Ascending aorta (tissue), 2 donors: ENCODE measurements at regions of chr14 and their contacts with region 1.

Region 1: DNA sequence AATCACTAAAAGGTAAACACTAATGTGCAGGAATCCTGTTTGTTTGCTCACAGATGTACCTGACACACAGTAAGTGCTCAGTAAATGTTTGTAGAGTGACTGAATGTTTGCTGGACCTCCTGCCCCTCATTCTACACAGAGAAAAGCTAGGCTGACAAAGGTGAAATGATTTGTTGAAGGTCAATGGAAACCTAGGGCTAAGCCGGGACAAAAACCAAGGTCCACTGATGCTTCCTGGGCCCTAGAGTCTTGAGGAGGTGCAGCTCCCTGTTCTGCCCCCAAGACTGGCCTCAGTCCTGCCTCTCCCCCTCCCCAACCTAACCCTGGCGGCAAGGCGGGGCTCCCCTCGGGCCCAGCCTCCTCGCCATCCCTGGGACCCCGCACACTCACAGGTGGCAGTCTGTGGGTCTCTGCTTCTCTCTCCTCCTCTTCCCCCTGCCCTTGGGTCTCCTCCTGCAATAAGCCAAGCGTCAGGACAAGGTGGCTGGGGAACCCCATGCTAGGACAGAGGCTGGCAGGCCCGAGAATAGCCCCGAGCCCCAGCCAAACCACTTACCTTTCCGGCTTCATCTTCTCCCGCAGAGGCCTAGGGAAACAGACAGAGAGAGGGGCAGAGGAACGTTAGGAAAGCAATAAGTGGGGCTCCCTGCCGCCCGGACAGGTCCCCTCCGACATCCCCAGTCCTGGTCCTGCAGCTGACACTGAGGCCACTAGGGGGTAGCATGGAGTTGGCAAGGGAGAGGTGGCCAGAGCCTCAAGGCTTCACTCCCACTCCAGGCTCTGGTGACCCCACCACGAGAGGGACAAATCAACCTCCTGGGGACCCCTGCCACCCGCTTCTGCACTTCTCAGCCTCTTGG is 9.3 kb downstream of the PGF start:
- DNase-seq: peak in 1 of 2 donors; percentile 89
- H3K4me3 ChIP-seq: peak overlapping the region in 1 of 2 donors; percentile 20
- H3K27ac ChIP-seq: peak overlapping the region; percentile 64 to 65
- H3K4me1 ChIP-seq: peaks cover 10 to 20% of the 10 kb centered on the region in 2 donors
- H3K27me3 ChIP-seq: no peaks in the 10 kb centered on the region
- CTCF ChIP-seq: peak; percentile 89 to 99 (median 95)

Region 2: GRCh38 chr14:74913986-74914573 is 32.0 kb before region 1 on chr14:
- intact Hi-C with region 1: loop called (anchors 2 kb)
- DNase-seq: peak in 1 of 2 donors; percentile 87
- H3K4me3 ChIP-seq: no peak overlapping the region
- H3K27ac ChIP-seq: peak overlapping the region; percentile 12 to 27
- H3K4me1 ChIP-seq: peaks cover 2 to 13% of the 10 kb centered on the region in 2 donors
- H3K27me3 ChIP-seq: no peaks in the 10 kb centered on the region
- CTCF ChIP-seq: peak; percentile 71 to 77 (median 74)

Region 3: DNA sequence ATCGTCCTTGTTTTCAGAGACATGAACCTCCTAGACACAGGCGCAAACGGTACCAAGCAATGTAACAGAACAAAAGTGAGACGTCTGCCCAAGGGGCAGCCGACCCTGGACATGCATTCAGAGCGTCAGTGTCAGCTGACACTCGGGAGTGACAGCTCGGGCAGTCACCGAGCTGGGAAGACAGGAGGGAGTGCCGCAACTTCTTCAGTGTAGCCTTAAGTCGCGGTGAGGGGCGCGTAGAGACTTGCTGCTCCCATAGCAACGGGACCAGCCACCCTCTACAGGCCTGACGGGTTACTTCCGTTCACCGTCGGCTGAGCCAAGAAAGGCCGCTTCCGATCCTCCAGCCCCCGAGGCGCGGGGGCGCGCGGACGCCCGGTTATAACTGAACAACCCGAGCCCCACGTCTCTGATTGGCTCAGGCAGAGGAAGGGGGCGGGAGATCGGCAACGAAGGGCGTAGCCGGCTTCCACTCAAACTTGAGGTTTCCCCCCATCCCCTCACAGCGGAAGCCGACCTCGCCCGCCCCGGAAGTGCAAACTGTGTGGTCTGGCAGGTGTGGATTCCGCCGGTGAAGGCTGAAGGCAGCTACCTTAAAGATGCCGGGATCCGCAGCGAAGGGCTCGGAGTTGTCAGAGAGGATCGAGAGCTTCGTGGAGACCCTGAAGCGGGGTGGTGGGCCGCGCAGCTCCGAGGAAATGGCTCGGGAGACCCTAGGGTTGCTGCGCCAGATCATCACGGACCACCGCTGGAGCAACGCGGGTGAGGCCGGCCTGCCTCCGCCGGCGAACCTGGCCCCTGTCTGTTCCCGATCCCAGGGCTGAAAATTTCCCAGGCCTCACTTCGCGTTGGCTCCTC is 56.6 kb after region 1 on chr14 and contains the start of gene EIF2B2:
- intact Hi-C with region 1: loop called (anchors 2 kb)
- DNase-seq: peak; percentile 95 to 99
- H3K4me3 ChIP-seq: peak within 1 kb of the TSS; percentile 60 to 79
- H3K27ac ChIP-seq: peak within 1 kb of the TSS; percentile 67 to 84
- H3K4me1 ChIP-seq: peaks cover 5 to 20% of the 10 kb centered on the region in 2 donors
- H3K27me3 ChIP-seq: no peaks in the 10 kb centered on the region
- CTCF ChIP-seq: peak; percentile 11 to 38 (median 20)
- total RNA-seq, gene EIF2B2: 27.1 TPM

Region 4: DNA sequence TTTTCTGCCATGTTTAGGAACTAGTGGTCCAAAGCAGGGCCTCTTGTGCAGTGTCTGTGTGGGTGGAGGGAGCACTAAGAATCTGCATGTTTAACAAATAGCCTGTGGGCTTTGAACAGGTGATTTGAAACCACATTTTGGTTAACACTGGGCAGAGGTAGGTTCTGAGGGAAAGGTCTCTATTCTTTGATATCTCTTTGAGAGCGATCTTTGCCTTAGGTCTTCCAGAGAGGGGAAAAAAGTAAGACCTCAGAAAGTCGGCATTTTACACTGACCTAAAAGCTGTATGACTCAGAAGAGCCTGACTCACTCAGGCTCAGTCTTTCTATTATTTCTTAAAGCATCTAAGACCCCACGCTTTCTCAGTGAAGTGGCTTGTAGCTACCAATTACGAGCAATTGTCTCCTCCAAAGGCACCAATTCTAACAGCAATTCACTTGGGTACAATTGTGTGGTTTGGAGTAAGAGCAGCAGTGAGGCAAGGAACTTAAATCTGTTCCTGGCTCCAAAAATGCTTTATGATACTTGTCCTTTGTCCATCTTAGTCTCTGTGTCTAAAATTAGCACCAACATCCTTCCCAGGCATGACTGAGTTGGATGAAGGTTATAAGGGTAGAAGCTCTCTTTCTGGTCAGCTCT is 65.4 kb after region 1 on chr14:
- intact Hi-C with region 1: loop called (anchors 1 kb)
- DNase-seq: no peak
- H3K4me3 ChIP-seq: no peak overlapping the region
- H3K27ac ChIP-seq: peak overlapping the region; percentile 78 to 84
- H3K4me1 ChIP-seq: peaks cover 9 to 16% of the 10 kb centered on the region in 2 donors
- H3K27me3 ChIP-seq: no peaks in the 10 kb centered on the region
- CTCF ChIP-seq: no peak

Region 5: GRCh38 chr14:75088574-75089373 is 142.7 kb after region 1 on chr14:
- intact Hi-C with region 1: loop called (anchors 2 kb)
- DNase-seq: peak in 1 of 2 donors; percentile 69
- H3K4me3 ChIP-seq: no peak overlapping the region
- H3K27ac ChIP-seq: no peak overlapping the region
- H3K4me1 ChIP-seq: no peaks in the 10 kb centered on the region
- H3K27me3 ChIP-seq: no peaks in the 10 kb centered on the region
- CTCF ChIP-seq: peak; percentile 71 to 82 (median 78)